Activated naive CD8-positive, alpha-beta T cell treated with anti-CD3 and anti-CD28 coated beads, Interleukin-2, amount 10 ng/mL, durations not matched to agents 7 days and 5 days (primary cell): ENCODE measurements at regions of chr1 and their contacts with region 1.

Region 1: GRCh38 chr1:27489910-27490741 is at the start of gene WASF2:
- DNase-seq: peak; percentile 96
- ATAC-seq: peak; percentile 96
- H3K4me3 Mint-ChIP-seq: peak within 1 kb of the TSS; percentile 88
- H3K27ac Mint-ChIP-seq: peak within 1 kb of the TSS; percentile 98
- H3K4me1 Mint-ChIP-seq: peaks cover 19% of the 10 kb centered on the region
- H3K27me3 Mint-ChIP-seq: no peaks in the 10 kb centered on the region
- total RNA-seq, gene WASF2: 139 to 148 TPM

Region 2: GRCh38 chr1:27455139-27455811 is 34.9 kb before region 1 on chr1:
- POLR2A ChIA-PET with region 1: interaction called, 10 read pairs
- DNase-seq: no peak
- ATAC-seq: peak; percentile 88
- H3K4me3 Mint-ChIP-seq: peak overlapping the region; percentile 68
- H3K27ac Mint-ChIP-seq: peak overlapping the region; percentile 84
- H3K4me1 Mint-ChIP-seq: peaks cover 36% of the 10 kb centered on the region
- H3K27me3 Mint-ChIP-seq: no peaks in the 10 kb centered on the region

Region 3: GRCh38 chr1:27556781-27557595 is 66.9 kb after region 1 on chr1:
- POLR2A ChIA-PET with region 1: interaction called, 10 read pairs
- DNase-seq: peak; percentile 75
- ATAC-seq: peak; percentile 53
- H3K4me3 Mint-ChIP-seq: peak overlapping the region; percentile 46
- H3K27ac Mint-ChIP-seq: peak overlapping the region; percentile 85
- H3K4me1 Mint-ChIP-seq: peaks cover 32% of the 10 kb centered on the region
- H3K27me3 Mint-ChIP-seq: no peaks in the 10 kb centered on the region

Region 4: GRCh38 chr1:27574871-27575831 is 85.0 kb after region 1 on chr1:
- POLR2A ChIA-PET with region 1: no interaction called
- DNase-seq: no peak
- ATAC-seq: no peak
- H3K4me3 Mint-ChIP-seq: no peak overlapping the region
- H3K27ac Mint-ChIP-seq: no peak overlapping the region
- H3K4me1 Mint-ChIP-seq: peaks cover 8% of the 10 kb centered on the region
- H3K27me3 Mint-ChIP-seq: peaks cover 10% of the 10 kb centered on the region